Naive thymus-derived CD4-positive, alpha-beta T cell (primary cell): ENCODE measurements at regions of chr11 and their contacts with region 1.

Region 1: DNA sequence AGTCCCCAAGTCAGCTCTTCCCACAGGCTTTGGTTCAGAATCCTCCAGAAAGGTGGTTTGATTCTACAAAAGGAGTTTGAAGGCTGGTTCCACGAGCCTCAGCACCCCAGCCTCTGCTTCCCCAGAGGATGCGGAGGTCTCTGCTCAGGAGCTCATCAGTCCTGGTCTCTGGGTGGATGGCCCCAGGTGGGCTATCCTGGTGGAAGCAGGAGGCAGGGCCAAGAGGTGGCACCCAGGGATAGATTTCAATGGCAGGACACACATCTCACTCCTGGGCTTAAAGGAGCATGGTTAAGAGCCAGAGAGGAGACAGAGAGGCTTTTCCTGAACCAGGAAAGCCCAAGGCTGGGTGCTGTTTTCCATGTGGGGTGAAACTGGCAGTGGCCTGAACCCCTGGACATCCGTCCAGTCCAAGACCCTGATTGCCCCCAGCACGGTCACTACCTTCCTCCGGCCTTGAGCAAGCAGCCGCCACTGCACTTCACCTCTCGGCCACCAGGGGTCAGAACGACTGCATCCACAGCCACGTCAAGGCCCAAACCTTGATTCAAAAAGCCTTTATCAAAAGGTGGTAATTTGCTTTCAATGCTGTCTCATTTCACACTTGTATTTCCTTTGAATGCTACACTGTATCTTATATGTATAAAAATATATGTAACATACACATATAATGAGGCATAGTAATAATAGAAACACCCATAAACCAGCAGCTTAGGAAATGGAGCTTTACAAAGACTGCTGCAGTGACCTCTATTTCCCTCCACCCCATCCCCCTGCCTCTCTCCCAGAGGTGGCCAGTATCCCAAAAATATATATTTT is 19.3 kb upstream of the FXYD2 start:
- DNase-seq: peak; percentile 63 to 84 (median 72)
- ATAC-seq: peak; percentile 78
- H3K4me3 ChIP-seq: no peak overlapping the region
- H3K4me3 Mint-ChIP-seq: no peak overlapping the region
- H3K27ac ChIP-seq: no peak overlapping the region
- H3K27ac Mint-ChIP-seq: peak overlapping the region in 2 of 9 donors; percentile 46 to 51
- H3K4me1 ChIP-seq: peaks cover 6 to 9% of the 10 kb centered on the region in 2 donors
- H3K4me1 Mint-ChIP-seq: peaks cover 0 to 10% (median 0%) of the 10 kb centered on the region in 7 donors
- H3K27me3 ChIP-seq: no peaks in the 10 kb centered on the region
- H3K27me3 Mint-ChIP-seq: peaks cover 0 to 32% (median 0%) of the 10 kb centered on the region in 5 donors

Region 2: GRCh38 chr11:117828611-117829368 is 15.1 kb before region 1 on chr11:
- CTCF ChIA-PET with region 1: interaction called, 16 read pairs
- POLR2A ChIA-PET with region 1: interaction called, 3 read pairs
- intact Hi-C with region 1: loop called in 1 of 2 experiments (anchors 1 kb)
- DNase-seq: peak in 6 of 9 donors; percentile 19 to 82 (median 24)
- ATAC-seq: peak; percentile 88
- H3K4me3 ChIP-seq: no peak overlapping the region
- H3K4me3 Mint-ChIP-seq: peak overlapping the region in 7 of 10 donors; percentile 16 to 79 (median 48)
- H3K27ac ChIP-seq: peak overlapping the region; percentile 35
- H3K27ac Mint-ChIP-seq: peak overlapping the region in 6 of 9 donors; percentile 16 to 87 (median 60)
- H3K4me1 ChIP-seq: peaks cover 38 to 47% of the 10 kb centered on the region in 2 donors
- H3K4me1 Mint-ChIP-seq: peaks cover 48 to 72% (median 50%) of the 10 kb centered on the region in 7 donors
- H3K27me3 ChIP-seq: no peaks in the 10 kb centered on the region
- H3K27me3 Mint-ChIP-seq: peaks cover 0 to 2% (median 0%) of the 10 kb centered on the region in 5 donors

Region 3: DNA sequence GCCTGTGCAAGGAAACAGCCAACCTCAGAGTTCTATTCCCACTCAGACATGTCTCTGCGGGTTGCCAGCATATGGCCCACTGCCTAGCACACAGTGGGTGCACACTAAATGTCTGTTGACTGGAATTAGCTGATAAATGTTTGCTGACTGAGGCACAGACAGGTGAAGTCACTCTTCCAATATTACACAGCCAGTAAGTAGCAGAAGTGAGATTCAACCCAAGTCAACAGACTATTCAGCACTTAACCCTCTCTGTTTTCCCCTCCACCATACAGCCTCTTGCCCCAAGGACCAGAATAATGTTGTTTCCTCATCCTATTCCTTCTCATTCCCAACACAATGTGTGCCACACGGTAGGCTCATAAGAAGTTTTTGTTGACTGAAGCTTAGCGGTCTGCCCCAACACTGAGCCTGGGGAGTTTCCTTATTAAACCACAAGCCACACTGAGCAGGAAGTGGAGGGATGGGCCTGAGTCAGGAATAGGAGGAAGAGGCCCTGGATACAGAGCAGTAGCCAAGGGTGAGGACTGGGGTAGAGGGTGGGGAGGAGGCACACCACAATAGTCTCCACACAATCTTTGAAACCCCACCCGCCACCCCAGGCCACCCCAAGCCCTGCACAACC is 126.6 kb after region 1 on chr11:
- CTCF ChIA-PET with region 1: no interaction called
- POLR2A ChIA-PET with region 1: no interaction called
- intact Hi-C with region 1: no loop called
- DNase-seq: peak in 1 of 9 donors; percentile 8
- ATAC-seq: peak; percentile 85
- H3K4me3 ChIP-seq: peak overlapping the region; percentile 31
- H3K4me3 Mint-ChIP-seq: peak overlapping the region in 9 of 10 donors; percentile 26 to 80 (median 50)
- H3K27ac ChIP-seq: no peak overlapping the region
- H3K27ac Mint-ChIP-seq: peak overlapping the region in 8 of 9 donors; percentile 7 to 76 (median 20)
- H3K4me1 ChIP-seq: peaks cover 48 to 50% of the 10 kb centered on the region in 2 donors
- H3K4me1 Mint-ChIP-seq: peaks cover 38 to 71% (median 65%) of the 10 kb centered on the region in 7 donors
- H3K27me3 ChIP-seq: no peaks in the 10 kb centered on the region
- H3K27me3 Mint-ChIP-seq: no peaks in the 10 kb centered on the region